CD4-positive, alpha-beta T cell (primary cell): ENCODE measurements at regions of chr6 and their contacts with region 1.

Region 1: GRCh38 chr6:44312901-44313788 is at the start of gene AARS2:
- DNase-seq: peak; percentile 84 to 97 (median 92)
- ATAC-seq: peak; percentile 90
- H3K4me3 ChIP-seq: peak within 1 kb of the TSS; percentile 87
- H3K4me3 Mint-ChIP-seq: peak within 1 kb of the TSS; percentile 97
- H3K27ac ChIP-seq: peak within 1 kb of the TSS; percentile 80 to 83
- H3K27ac Mint-ChIP-seq: peak within 1 kb of the TSS; percentile 91
- H3K4me1 ChIP-seq: peaks cover 13% of the 10 kb centered on the region
- H3K4me1 Mint-ChIP-seq: peaks cover 28% of the 10 kb centered on the region
- H3K27me3 ChIP-seq: no peaks in the 10 kb centered on the region
- H3K27me3 Mint-ChIP-seq: no peaks in the 10 kb centered on the region
- CTCF ChIP-seq: peak; percentile 97
- total RNA-seq, gene AARS2: 12.0 to 12.7 TPM

Region 2: GRCh38 chr6:44201638-44202303 is 111.4 kb before region 1 on chr6:
- CTCF ChIA-PET with region 1: no interaction called
- POLR2A ChIA-PET with region 1: no interaction called
- intact Hi-C with region 1: no loop called
- DNase-seq: no peak
- ATAC-seq: no peak
- H3K4me3 ChIP-seq: no peak overlapping the region
- H3K4me3 Mint-ChIP-seq: no peak overlapping the region
- H3K27ac ChIP-seq: no peak overlapping the region
- H3K27ac Mint-ChIP-seq: no peak overlapping the region
- H3K4me1 ChIP-seq: no peaks in the 10 kb centered on the region
- H3K4me1 Mint-ChIP-seq: no peaks in the 10 kb centered on the region
- H3K27me3 ChIP-seq: no peaks in the 10 kb centered on the region
- H3K27me3 Mint-ChIP-seq: no peaks in the 10 kb centered on the region
- CTCF ChIP-seq: no peak

Region 3: GRCh38 chr6:44297063-44298038 is 15.8 kb before region 1 on chr6:
- CTCF ChIA-PET with region 1: interaction called, 12 read pairs
- POLR2A ChIA-PET with region 1: interaction called, 18 read pairs
- intact Hi-C with region 1: no loop called
- DNase-seq: peak; percentile 13 to 71 (median 44)
- ATAC-seq: peak; percentile 88
- H3K4me3 ChIP-seq: peak overlapping the region; percentile 40
- H3K4me3 Mint-ChIP-seq: peak overlapping the region; percentile 54
- H3K27ac ChIP-seq: no peak overlapping the region
- H3K27ac Mint-ChIP-seq: no peak overlapping the region
- H3K4me1 ChIP-seq: peaks cover 16% of the 10 kb centered on the region
- H3K4me1 Mint-ChIP-seq: peaks cover 15% of the 10 kb centered on the region
- H3K27me3 ChIP-seq: peaks cover 38 to 46% of the 10 kb centered on the region in 2 experiments
- H3K27me3 Mint-ChIP-seq: peaks cover 44% of the 10 kb centered on the region
- CTCF ChIP-seq: no peak

Region 4: DNA sequence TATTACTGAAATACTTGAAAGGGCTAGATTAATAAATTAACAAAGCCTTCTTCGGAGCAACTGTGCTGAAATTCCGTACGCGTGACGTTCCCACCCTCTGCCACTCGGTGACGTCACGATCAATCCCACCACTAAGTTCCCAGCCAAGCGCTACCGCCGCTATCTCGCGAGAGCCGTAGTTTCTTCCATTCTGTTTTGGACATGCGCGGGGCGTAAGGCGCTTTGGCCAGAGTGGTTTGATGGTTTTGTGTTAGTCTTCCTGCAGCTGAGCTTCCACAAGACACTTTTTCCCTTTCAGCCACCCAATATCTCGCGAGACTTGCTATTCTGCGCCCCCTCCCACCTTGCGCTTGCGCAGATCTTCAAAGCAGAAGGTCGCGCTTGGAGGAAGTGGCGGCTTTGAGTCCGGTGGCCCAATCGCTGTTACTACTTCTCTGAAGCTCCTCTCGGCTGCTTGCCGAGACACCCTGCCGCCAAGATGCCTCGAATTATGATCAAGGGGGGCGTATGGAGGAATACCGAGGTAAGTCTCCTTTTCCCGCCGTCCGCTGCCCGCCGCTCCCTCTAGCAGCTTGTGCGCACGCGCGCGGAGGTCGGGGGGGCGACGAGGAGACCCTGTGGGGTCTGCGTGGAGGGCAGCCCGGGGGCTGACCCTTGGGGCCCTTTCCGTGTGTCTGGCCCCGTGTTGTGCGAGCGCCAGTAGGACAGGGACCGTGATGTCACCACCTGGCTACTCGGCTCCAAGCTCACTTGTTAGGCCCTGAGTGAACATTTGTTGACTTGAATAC is 74.4 kb after region 1 on chr6 and contains the start of gene CDC5L:
- CTCF ChIA-PET with region 1: interaction called, 10 read pairs
- POLR2A ChIA-PET with region 1: interaction called, 5 read pairs
- intact Hi-C with region 1: loop called in 1 of 2 experiments (anchors 1 kb)
- DNase-seq: peak; percentile 74 to 98 (median 86)
- ATAC-seq: peak; percentile 81
- H3K4me3 ChIP-seq: peak within 1 kb of the TSS; percentile 84
- H3K4me3 Mint-ChIP-seq: peak within 1 kb of the TSS; percentile 97
- H3K27ac ChIP-seq: peak within 1 kb of the TSS; percentile 89 to 93
- H3K27ac Mint-ChIP-seq: peak within 1 kb of the TSS; percentile 93
- H3K4me1 ChIP-seq: peaks cover 19% of the 10 kb centered on the region
- H3K4me1 Mint-ChIP-seq: peaks cover 40% of the 10 kb centered on the region
- H3K27me3 ChIP-seq: no peaks in the 10 kb centered on the region
- H3K27me3 Mint-ChIP-seq: no peaks in the 10 kb centered on the region
- CTCF ChIP-seq: no peak
- total RNA-seq, gene CDC5L: 18.9 to 19.9 TPM

Region 5: GRCh38 chr6:45344900-45345299 is 1031.8 kb after region 1 on chr6:
- CTCF ChIA-PET with region 1: no interaction called
- POLR2A ChIA-PET with region 1: no interaction called
- intact Hi-C with region 1: no loop called
- DNase-seq: no peak
- ATAC-seq: no peak
- H3K4me3 ChIP-seq: no peak overlapping the region
- H3K4me3 Mint-ChIP-seq: no peak overlapping the region
- H3K27ac ChIP-seq: no peak overlapping the region
- H3K27ac Mint-ChIP-seq: no peak overlapping the region
- H3K4me1 ChIP-seq: no peaks in the 10 kb centered on the region
- H3K4me1 Mint-ChIP-seq: no peaks in the 10 kb centered on the region
- H3K27me3 ChIP-seq: no peaks in the 10 kb centered on the region
- H3K27me3 Mint-ChIP-seq: no peaks in the 10 kb centered on the region
- CTCF ChIP-seq: no peak